ENCODE measurements at regions of chr11 and their contacts with region 1.

Region 1: GRCh38 chr11:120688163-120688562 is 176.6 kb downstream of the GRIK4 start:
- DNase-seq: no peak
- ATAC-seq: peak; percentile 52
- H3K4me3 ChIP-seq: no peak overlapping the region
- H3K27ac ChIP-seq: no peak overlapping the region
- H3K4me1 ChIP-seq: no peaks in the 10 kb centered on the region
- H3K27me3 ChIP-seq: no peaks in the 10 kb centered on the region
- CTCF ChIP-seq: no peak
- EP300 ChIP-seq: no peak
- POLR2A ChIP-seq: no peak
- RAD21 ChIP-seq: no peak

Region 2: DNA sequence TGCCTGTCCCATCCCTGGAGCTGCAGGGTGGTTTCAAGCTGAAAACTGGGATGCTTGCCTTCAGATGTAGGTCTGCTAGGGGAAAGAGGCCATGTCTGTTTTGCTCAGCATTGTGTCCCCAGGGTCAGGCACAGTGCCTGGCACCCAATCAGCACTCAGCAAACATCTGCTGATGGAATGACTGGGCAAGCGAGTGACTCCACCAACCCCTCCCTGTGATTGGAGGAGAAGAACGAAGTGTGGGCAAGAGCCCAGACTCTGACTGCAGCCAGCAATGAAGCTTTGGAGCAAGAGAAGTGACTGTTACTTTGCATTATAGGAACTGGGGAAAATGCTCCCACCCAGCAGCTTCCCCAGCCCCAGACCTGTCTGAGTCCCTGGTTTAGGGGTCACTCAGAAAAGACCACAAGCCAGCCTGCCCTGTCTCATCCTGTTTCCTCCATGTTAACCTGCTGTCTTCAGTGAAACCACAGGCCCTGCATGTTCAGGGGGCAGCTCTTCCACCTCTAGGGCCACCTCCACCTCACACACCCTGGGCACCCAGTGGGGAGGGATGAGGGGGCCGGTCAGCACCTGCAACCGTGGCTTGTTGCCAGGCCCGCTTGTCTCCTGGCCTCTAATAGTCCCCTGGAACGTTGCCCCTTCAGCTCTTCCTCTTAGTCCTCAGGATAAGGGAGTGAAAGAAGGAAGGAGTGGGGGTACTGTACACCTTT is 697.7 kb before region 1 on chr11:
- CTCF ChIA-PET with region 1: no interaction called
- POLR2A ChIA-PET with region 1: no interaction called
- RAD21 ChIA-PET with region 1: no interaction called
- SMC1A ChIA-PET with region 1: no interaction called
- in situ Hi-C with region 1: no loop called
- intact Hi-C with region 1: no loop called
- DNase-seq: no peak
- ATAC-seq: no peak
- H3K4me3 ChIP-seq: no peak overlapping the region
- H3K27ac ChIP-seq: no peak overlapping the region
- H3K4me1 ChIP-seq: no peaks in the 10 kb centered on the region
- H3K27me3 ChIP-seq: peaks cover 11 to 21% of the 10 kb centered on the region in 2 experiments
- CTCF ChIP-seq: no peak
- EP300 ChIP-seq: no peak
- POLR2A ChIP-seq: no peak
- RAD21 ChIP-seq: no peak

Region 3: GRCh38 chr11:120622189-120622875 is 65.8 kb before region 1 on chr11:
- CTCF ChIA-PET with region 1: interaction called, 45 read pairs
- POLR2A ChIA-PET with region 1: interaction called, 3 read pairs
- RAD21 ChIA-PET with region 1: interaction called, 25 read pairs
- SMC1A ChIA-PET with region 1: interaction called, 23 read pairs
- in situ Hi-C with region 1: no loop called
- intact Hi-C with region 1: no loop called
- DNase-seq: no peak
- ATAC-seq: peak; percentile 89
- H3K4me3 ChIP-seq: no peak overlapping the region
- H3K27ac ChIP-seq: no peak overlapping the region; the same call in 1 of the 2 replicates
- H3K4me1 ChIP-seq: peaks cover 6% of the 10 kb centered on the region; the same call in 1 of the 2 replicates
- H3K27me3 ChIP-seq: no peaks in the 10 kb centered on the region
- CTCF ChIP-seq: peak; percentile 35 to 56 (median 54)
- EP300 ChIP-seq: no peak
- POLR2A ChIP-seq: no peak
- RAD21 ChIP-seq: peak; percentile 36

Region 4: GRCh38 chr11:120667281-120667680 is 20.9 kb before region 1 on chr11:
- CTCF ChIA-PET with region 1: interaction called, 111 read pairs
- POLR2A ChIA-PET with region 1: no interaction called
- RAD21 ChIA-PET with region 1: interaction called, 9 read pairs
- SMC1A ChIA-PET with region 1: interaction called, 6 read pairs
- in situ Hi-C with region 1: no loop called
- intact Hi-C with region 1: no loop called
- DNase-seq: no peak
- ATAC-seq: no peak; the same call in 2 of the 3 replicates
- H3K4me3 ChIP-seq: no peak overlapping the region
- H3K27ac ChIP-seq: no peak overlapping the region
- H3K4me1 ChIP-seq: no peaks in the 10 kb centered on the region
- H3K27me3 ChIP-seq: no peaks in the 10 kb centered on the region; a peak in 1 of 4 replicates
- CTCF ChIP-seq: no peak
- EP300 ChIP-seq: no peak
- POLR2A ChIP-seq: no peak
- RAD21 ChIP-seq: no peak

Region 5: GRCh38 chr11:120719348-120719747 is 31.2 kb after region 1 on chr11:
- CTCF ChIA-PET with region 1: interaction called, 86 read pairs
- POLR2A ChIA-PET with region 1: no interaction called
- RAD21 ChIA-PET with region 1: interaction called, 13 read pairs
- SMC1A ChIA-PET with region 1: interaction called, 23 read pairs
- in situ Hi-C with region 1: no loop called
- intact Hi-C with region 1: no loop called
- DNase-seq: no peak
- ATAC-seq: no peak
- H3K4me3 ChIP-seq: no peak overlapping the region
- H3K27ac ChIP-seq: no peak overlapping the region
- H3K4me1 ChIP-seq: peaks cover 14% of the 10 kb centered on the region
- H3K27me3 ChIP-seq: no peaks in the 10 kb centered on the region
- CTCF ChIP-seq: no peak
- EP300 ChIP-seq: no peak
- POLR2A ChIP-seq: no peak
- RAD21 ChIP-seq: no peak

Region 6: GRCh38 chr11:120952461-120953434 is 264.6 kb after region 1 on chr11:
- CTCF ChIA-PET with region 1: interaction called, 21 read pairs
- POLR2A ChIA-PET with region 1: interaction called, 3 read pairs
- RAD21 ChIA-PET with region 1: interaction called, 5 read pairs
- SMC1A ChIA-PET with region 1: interaction called, 15 read pairs
- in situ Hi-C with region 1: no loop called
- intact Hi-C with region 1: no loop called
- DNase-seq: peak; percentile 26
- ATAC-seq: peak; percentile 91
- H3K4me3 ChIP-seq: no peak overlapping the region
- H3K27ac ChIP-seq: no peak overlapping the region
- H3K4me1 ChIP-seq: peaks cover 8% of the 10 kb centered on the region
- H3K27me3 ChIP-seq: no peaks in the 10 kb centered on the region; a peak in 1 of 4 replicates
- CTCF ChIP-seq: peak; percentile 80 to 96 (median 83)
- EP300 ChIP-seq: no peak
- POLR2A ChIP-seq: no peak
- RAD21 ChIP-seq: peak; percentile 97

Measured in GM12878 (cell line).